Mammary epithelial cell (primary cell): ENCODE measurements at regions of chr1 and their contacts with region 1.

Region 1: DNA sequence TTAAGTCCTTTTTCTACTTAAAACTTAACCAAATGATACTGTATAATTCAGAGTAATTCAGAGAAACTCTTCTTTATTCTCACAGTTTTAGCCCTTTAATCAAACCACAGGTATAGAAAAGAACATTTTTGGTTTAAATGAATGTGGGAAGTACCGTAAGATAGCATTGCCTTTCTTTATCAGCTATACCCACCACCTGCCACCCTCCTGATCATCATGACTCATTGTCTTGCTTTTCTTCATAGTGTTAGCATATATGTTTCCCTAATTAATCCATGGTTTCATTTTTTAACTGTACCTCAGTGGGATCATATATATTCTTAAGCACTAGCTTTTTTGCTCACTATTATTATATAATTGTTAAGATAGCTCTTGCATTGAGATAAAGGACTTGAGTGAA is 27.5 kb upstream of the ANGPTL1 start:
- DNase-seq: no peak
- H3K4me3 ChIP-seq: no peak overlapping the region
- H3K27ac ChIP-seq: no peak overlapping the region
- H3K4me1 ChIP-seq: no peaks in the 10 kb centered on the region
- H3K27me3 ChIP-seq: no peaks in the 10 kb centered on the region
- CTCF ChIP-seq: no peak

Region 2: GRCh38 chr1:178938959-178939317 is 40.5 kb after region 1 on chr1:
- CTCF ChIA-PET with region 1: no interaction called
- dilution Hi-C with region 1: loop called (anchors 5 kb)
- in situ Hi-C with region 1: no loop called
- intact Hi-C with region 1: no loop called
- DNase-seq: no peak
- H3K4me3 ChIP-seq: no peak overlapping the region
- H3K27ac ChIP-seq: no peak overlapping the region
- H3K4me1 ChIP-seq: no peaks in the 10 kb centered on the region
- H3K27me3 ChIP-seq: no peaks in the 10 kb centered on the region
- CTCF ChIP-seq: no peak

Region 3: GRCh38 chr1:178973666-178974101 is 75.3 kb after region 1 on chr1:
- CTCF ChIA-PET with region 1: no interaction called
- dilution Hi-C with region 1: no loop called
- in situ Hi-C with region 1: no loop called
- intact Hi-C with region 1: no loop called
- DNase-seq: no peak
- H3K4me3 ChIP-seq: no peak overlapping the region
- H3K27ac ChIP-seq: no peak overlapping the region
- H3K4me1 ChIP-seq: no peaks in the 10 kb centered on the region
- H3K27me3 ChIP-seq: no peaks in the 10 kb centered on the region
- CTCF ChIP-seq: no peak